CD14-positive monocyte (primary cell): ENCODE measurements at regions of chr6 and their contacts with region 1.

Region 1: DNA sequence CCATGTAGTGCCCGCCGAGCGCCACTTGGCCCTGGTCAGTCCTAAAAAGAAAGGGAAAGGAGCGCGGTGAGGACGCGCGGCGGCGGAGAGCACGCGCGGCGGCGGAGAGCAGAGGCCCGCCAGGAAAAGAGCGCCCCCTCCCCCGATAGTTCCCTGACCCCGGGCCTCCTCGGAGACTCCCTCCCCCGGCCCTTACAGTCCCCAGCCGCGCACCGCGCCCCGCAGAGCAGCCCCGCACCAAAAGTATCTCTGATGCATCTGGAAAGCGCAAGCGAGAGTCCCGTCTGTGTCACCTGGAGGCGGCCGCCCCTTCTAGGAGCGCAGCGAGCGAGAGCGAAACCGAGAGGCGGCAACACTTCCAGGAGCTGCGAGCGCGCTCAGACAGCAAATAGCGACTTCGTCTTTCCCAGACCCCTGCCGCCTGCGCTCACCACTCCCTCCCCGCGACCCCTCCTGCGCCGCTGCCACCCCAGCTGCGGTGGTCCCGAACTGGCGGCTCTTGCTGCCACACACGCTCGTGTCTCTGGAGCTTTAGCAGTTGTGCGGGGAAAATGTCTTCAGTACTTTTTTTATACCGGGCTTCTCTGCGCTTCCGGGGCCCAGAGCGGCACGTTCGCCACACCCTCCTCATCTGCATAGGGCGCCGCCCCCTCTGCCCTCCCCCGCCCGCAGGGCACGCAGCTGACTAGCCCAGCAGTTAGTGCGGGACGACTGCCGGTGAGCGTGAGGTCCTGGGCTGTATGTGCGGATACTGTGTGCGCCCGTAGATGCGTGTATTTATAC is at the start of gene TENT5A:
- DNase-seq: peak; percentile 88 to 92 (median 92)
- H3K4me3 ChIP-seq: peak within 1 kb of the TSS; percentile 81 to 95 (median 88)
- H3K4me3 Mint-ChIP-seq: peak within 1 kb of the TSS; percentile 99 to 100
- H3K27ac ChIP-seq: peak within 1 kb of the TSS; percentile 98 to 99
- H3K27ac Mint-ChIP-seq: peak within 1 kb of the TSS; percentile 97 to 100 (median 99)
- H3K4me1 ChIP-seq: peaks cover 44 to 68% of the 10 kb centered on the region in 2 donors
- H3K4me1 Mint-ChIP-seq: peaks cover 70% of the 10 kb centered on the region
- H3K27me3 ChIP-seq: no peaks in the 10 kb centered on the region
- H3K27me3 Mint-ChIP-seq: no peaks in the 10 kb centered on the region
- CTCF ChIP-seq: no peak
- polyA plus RNA-seq, gene TENT5A: 9.1 to 28.9 (median 12.1) TPM

Region 2: DNA sequence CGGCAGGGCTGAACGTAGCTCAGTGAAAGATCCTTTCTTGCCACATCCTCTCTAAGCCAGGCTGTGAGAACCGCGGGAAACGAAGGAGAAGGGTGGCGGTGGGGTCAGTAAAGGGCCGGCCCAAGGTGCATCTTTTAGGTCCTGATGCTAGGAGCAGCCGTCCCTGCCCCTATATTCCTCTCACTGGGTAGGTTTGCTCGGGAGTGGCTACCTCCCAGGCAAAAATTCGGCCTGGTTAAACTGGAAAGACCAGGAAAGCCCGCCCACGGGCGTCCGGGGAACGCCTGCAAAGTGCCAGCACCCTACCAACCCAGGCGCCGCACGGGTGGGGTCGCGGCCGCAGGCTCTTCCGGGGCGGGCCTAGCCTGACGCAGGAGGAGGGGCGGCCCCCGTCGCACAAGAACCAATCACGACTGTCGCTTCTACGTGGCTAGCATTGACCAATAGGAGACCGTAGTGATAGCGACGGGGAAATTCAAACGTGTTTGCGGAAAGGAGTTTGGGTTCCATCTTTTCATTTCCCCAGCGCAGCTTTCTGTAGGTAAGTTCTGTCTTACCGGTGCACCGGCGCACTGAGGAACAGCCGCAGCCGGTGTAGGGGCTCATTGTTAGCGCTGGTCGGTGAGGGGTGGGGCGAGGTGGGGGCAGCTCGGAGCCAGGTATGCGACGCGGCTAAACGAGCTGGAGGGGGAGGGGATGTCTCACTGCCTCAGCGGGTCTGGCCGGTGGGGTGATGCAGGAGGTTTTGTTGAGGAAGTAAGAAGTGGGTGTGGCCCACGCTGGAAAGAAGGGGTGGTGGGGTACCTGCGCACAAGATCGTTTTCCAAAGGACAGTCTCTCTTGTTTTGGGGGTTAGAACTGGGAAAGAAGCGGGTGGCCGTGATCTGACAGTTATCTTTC is 1747.9 kb before region 1 on chr6 and contains the start of gene TTK:
- intact Hi-C with region 1: loop called in 1 of 2 experiments (anchors 10 kb)
- DNase-seq: peak; percentile 85 to 93 (median 90)
- H3K4me3 ChIP-seq: peak within 1 kb of the TSS; percentile 70 to 94 (median 84)
- H3K4me3 Mint-ChIP-seq: peak within 1 kb of the TSS; percentile 86 to 97
- H3K27ac ChIP-seq: peak within 1 kb of the TSS; percentile 75 to 84
- H3K27ac Mint-ChIP-seq: peak within 1 kb of the TSS; percentile 86 to 95 (median 92)
- H3K4me1 ChIP-seq: peaks cover 12 to 21% of the 10 kb centered on the region in 2 donors
- H3K4me1 Mint-ChIP-seq: peaks cover 18% of the 10 kb centered on the region
- H3K27me3 ChIP-seq: no peaks in the 10 kb centered on the region
- H3K27me3 Mint-ChIP-seq: peaks cover 0 to 2% (median 2%) of the 10 kb centered on the region in 3 donors
- CTCF ChIP-seq: no peak
- polyA plus RNA-seq, gene TTK: not detected

Region 3: GRCh38 chr6:80106418-80107235 is 1645.7 kb before region 1 on chr6 and contains the start of gene BCKDHB:
- intact Hi-C with region 1: loop called in 1 of 2 experiments (anchors 5 kb)
- DNase-seq: peak; percentile 97 to 98 (median 97)
- H3K4me3 ChIP-seq: peak within 1 kb of the TSS; percentile 55 to 81 (median 65)
- H3K4me3 Mint-ChIP-seq: peak within 1 kb of the TSS; percentile 87 to 97
- H3K27ac ChIP-seq: peak within 1 kb of the TSS in 1 of 2 donors; percentile 59
- H3K27ac Mint-ChIP-seq: peak within 1 kb of the TSS; percentile 41 to 90 (median 81)
- H3K4me1 ChIP-seq: peaks cover 8 to 13% of the 10 kb centered on the region in 2 donors
- H3K4me1 Mint-ChIP-seq: peaks cover 15% of the 10 kb centered on the region
- H3K27me3 ChIP-seq: peaks cover 0 to 2% of the 10 kb centered on the region in 2 donors
- H3K27me3 Mint-ChIP-seq: peaks cover 3 to 6% (median 5%) of the 10 kb centered on the region in 3 donors
- CTCF ChIP-seq: no peak
- polyA plus RNA-seq, gene BCKDHB: 1.8 to 4.6 (median 4.0) TPM

Region 4: DNA sequence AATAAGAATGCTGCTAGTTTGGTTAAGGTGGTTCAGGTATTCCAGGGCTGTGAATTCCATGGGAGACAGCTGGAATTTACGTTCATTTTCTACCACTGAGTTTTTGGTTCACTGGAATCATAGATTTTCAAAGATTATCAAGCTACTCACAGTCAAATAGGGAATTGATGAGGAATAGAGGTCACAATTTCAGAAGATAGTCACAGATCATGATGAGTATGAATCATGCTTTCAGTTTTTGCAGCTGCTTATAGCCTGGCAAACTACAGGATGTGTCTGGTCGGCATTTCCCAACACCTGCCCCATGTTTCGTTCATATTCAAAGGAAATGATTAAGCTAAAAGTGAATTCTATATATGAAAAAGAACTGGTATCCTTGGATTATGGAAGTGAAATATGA is 1587.2 kb before region 1 on chr6:
- intact Hi-C with region 1: loop called in 1 of 2 experiments (anchors 5 kb)
- DNase-seq: peak; percentile 26 to 71 (median 45)
- H3K4me3 ChIP-seq: no peak overlapping the region
- H3K4me3 Mint-ChIP-seq: peak overlapping the region in 1 of 2 donors; percentile 72
- H3K27ac ChIP-seq: peak overlapping the region in 1 of 2 donors; percentile 13
- H3K27ac Mint-ChIP-seq: peak overlapping the region in 4 of 7 donors; percentile 3 to 72 (median 28)
- H3K4me1 ChIP-seq: peaks cover 16 to 22% of the 10 kb centered on the region in 2 donors
- H3K4me1 Mint-ChIP-seq: peaks cover 2% of the 10 kb centered on the region
- H3K27me3 ChIP-seq: no peaks in the 10 kb centered on the region
- H3K27me3 Mint-ChIP-seq: peaks cover 0 to 2% (median 0%) of the 10 kb centered on the region in 3 donors
- CTCF ChIP-seq: no peak

Region 5: GRCh38 chr6:80338201-80338836 is 1414.0 kb before region 1 on chr6:
- intact Hi-C with region 1: loop called in 1 of 2 experiments (anchors 10 kb)
- DNase-seq: peak; percentile 23 to 37 (median 37)
- H3K4me3 ChIP-seq: no peak overlapping the region
- H3K4me3 Mint-ChIP-seq: no peak overlapping the region
- H3K27ac ChIP-seq: no peak overlapping the region
- H3K27ac Mint-ChIP-seq: no peak overlapping the region
- H3K4me1 ChIP-seq: no peaks in the 10 kb centered on the region
- H3K4me1 Mint-ChIP-seq: no peaks in the 10 kb centered on the region
- H3K27me3 ChIP-seq: no peaks in the 10 kb centered on the region
- H3K27me3 Mint-ChIP-seq: no peaks in the 10 kb centered on the region
- CTCF ChIP-seq: peak; percentile 88

Region 6: DNA sequence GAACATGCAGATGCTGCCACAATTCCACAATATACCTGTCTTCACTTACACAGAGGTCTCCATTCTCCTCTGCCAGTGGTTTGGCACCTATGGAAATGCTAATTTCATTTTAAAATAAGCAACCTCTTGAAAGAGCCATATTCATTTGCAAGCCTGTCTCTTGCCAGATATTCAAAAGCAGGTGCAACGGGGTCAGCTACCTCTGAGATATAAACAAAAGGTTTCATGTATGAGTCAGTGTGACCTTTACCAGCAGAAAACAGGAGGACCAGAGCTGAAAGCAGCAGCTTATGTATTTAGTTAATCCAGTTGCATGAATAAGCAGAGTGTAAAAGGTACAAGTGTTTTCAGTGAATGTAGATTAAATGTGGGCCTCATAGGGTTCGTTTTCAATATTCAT is 55.8 kb before region 1 on chr6:
- intact Hi-C with region 1: no loop called
- DNase-seq: no peak
- H3K4me3 ChIP-seq: no peak overlapping the region
- H3K4me3 Mint-ChIP-seq: no peak overlapping the region
- H3K27ac ChIP-seq: no peak overlapping the region
- H3K27ac Mint-ChIP-seq: no peak overlapping the region
- H3K4me1 ChIP-seq: no peaks in the 10 kb centered on the region
- H3K4me1 Mint-ChIP-seq: peaks cover 3% of the 10 kb centered on the region
- H3K27me3 ChIP-seq: no peaks in the 10 kb centered on the region
- H3K27me3 Mint-ChIP-seq: no peaks in the 10 kb centered on the region
- CTCF ChIP-seq: no peak

Region 7: DNA sequence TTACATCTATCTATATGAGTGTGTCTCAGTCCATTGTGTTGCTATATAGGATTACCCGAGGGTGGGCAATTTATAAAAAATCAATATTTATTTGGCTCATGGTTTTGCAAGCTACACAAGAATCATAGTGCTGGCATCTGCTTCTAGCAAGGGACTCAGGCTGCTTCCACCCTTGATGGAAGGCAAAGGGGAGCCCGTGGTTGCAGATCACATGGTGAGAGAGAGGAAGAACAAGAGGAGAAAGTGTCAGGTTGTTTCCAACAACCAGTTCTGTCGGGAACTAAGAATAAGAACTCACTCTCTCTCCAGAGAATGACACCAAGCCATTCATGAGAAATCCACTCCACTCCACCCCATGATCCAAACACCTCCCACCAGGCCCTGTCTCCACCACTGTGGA is 48.3 kb after region 1 on chr6:
- intact Hi-C with region 1: no loop called
- DNase-seq: no peak
- H3K4me3 ChIP-seq: no peak overlapping the region
- H3K4me3 Mint-ChIP-seq: no peak overlapping the region
- H3K27ac ChIP-seq: no peak overlapping the region
- H3K27ac Mint-ChIP-seq: no peak overlapping the region
- H3K4me1 ChIP-seq: peaks cover 9 to 16% of the 10 kb centered on the region in 2 donors
- H3K4me1 Mint-ChIP-seq: peaks cover 21% of the 10 kb centered on the region
- H3K27me3 ChIP-seq: no peaks in the 10 kb centered on the region
- H3K27me3 Mint-ChIP-seq: no peaks in the 10 kb centered on the region
- CTCF ChIP-seq: no peak

Region 8: GRCh38 chr6:81818901-81819361 is 66.6 kb after region 1 on chr6:
- intact Hi-C with region 1: loop called (anchors 5 to 10 kb)
- DNase-seq: peak in 2 of 3 donors; percentile 19 to 23
- H3K4me3 ChIP-seq: no peak overlapping the region
- H3K4me3 Mint-ChIP-seq: peak overlapping the region in 1 of 2 donors; percentile 57
- H3K27ac ChIP-seq: peak overlapping the region in 1 of 2 donors; percentile 6
- H3K27ac Mint-ChIP-seq: peak overlapping the region; percentile 1 to 80 (median 48)
- H3K4me1 ChIP-seq: peaks cover 28 to 36% of the 10 kb centered on the region in 2 donors
- H3K4me1 Mint-ChIP-seq: peaks cover 34% of the 10 kb centered on the region
- H3K27me3 ChIP-seq: no peaks in the 10 kb centered on the region
- H3K27me3 Mint-ChIP-seq: peaks cover 0 to 1% (median 0%) of the 10 kb centered on the region in 3 donors
- CTCF ChIP-seq: no peak

Region 9: GRCh38 chr6:81844686-81845085 is 92.4 kb after region 1 on chr6:
- intact Hi-C with region 1: no loop called
- DNase-seq: no peak
- H3K4me3 ChIP-seq: no peak overlapping the region
- H3K4me3 Mint-ChIP-seq: no peak overlapping the region
- H3K27ac ChIP-seq: no peak overlapping the region
- H3K27ac Mint-ChIP-seq: no peak overlapping the region
- H3K4me1 ChIP-seq: no peaks in the 10 kb centered on the region
- H3K4me1 Mint-ChIP-seq: peaks cover 6% of the 10 kb centered on the region
- H3K27me3 ChIP-seq: no peaks in the 10 kb centered on the region
- H3K27me3 Mint-ChIP-seq: no peaks in the 10 kb centered on the region
- CTCF ChIP-seq: no peak